Ascending aorta (tissue), 2 donors: ENCODE measurements at regions of chrX and their contacts with region 1.

Region 1: DNA sequence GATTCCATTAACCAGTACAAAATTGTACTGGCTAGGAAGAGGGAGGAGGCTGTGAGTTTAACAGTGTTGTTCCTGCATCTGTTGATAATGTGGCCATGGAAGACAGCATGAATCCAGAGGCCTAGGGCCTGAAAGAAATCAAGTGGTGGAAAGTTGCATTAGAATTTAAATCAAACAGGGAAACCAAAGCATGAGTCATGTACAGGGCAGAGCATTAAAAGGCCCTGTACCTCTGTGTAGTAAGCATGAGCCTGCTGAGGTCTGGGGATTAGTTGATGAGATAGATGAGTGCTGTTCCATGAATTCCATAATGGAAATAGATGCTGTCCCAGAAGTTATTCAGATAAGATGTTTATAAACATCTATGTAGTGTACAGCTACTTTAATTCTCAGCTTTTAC is 58.3 kb downstream of the MID1IP1 start:
- DNase-seq: no peak
- H3K4me3 ChIP-seq: no peak overlapping the region
- H3K27ac ChIP-seq: no peak overlapping the region
- H3K4me1 ChIP-seq: no peaks in the 10 kb centered on the region
- H3K27me3 ChIP-seq: no peaks in the 10 kb centered on the region
- CTCF ChIP-seq: no peak

Region 2: DNA sequence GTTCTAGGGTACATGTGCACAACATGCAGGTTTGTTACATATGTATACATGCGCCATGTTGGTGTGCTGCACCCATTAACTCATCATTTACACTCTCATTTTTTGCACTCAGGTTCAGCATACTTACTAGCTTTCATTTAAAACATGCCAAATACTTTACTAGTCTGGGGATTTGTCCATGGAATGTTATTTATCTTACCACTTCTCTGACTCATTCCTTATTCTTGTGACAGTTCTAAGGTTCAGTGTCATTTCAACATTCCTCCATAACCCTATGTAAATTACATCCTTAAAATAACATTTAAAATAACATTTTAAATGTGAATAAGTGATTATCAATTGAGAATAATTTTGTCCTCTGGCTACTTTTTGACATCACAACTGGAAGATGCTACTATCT is 872.7 kb before region 1 on chrX:
- intact Hi-C with region 1: no loop called
- DNase-seq: no peak
- H3K4me3 ChIP-seq: no peak overlapping the region
- H3K27ac ChIP-seq: no peak overlapping the region
- H3K4me1 ChIP-seq: no peaks in the 10 kb centered on the region
- H3K27me3 ChIP-seq: no peaks in the 10 kb centered on the region
- CTCF ChIP-seq: no peak

Region 3: DNA sequence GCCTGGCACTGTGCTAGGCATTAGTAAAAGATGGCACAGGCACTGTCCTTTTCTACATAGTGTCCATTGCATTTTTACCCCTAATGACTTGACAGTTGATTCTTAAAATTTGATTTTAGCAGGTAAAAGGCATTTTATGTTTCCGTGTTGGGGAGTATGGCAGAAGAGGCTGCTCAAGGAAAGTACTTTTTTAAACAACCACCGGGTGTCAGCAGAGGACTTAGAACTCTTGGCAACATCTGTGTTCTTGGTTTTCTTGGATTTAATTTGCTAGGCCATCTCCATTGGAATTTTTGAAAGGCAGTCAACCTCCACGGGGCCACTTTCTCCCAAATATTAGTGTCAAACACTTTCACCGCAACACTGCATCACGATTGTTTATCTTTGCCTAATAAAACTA is 195.3 kb before region 1 on chrX:
- intact Hi-C with region 1: no loop called
- DNase-seq: no peak
- H3K4me3 ChIP-seq: no peak overlapping the region
- H3K27ac ChIP-seq: no peak overlapping the region
- H3K4me1 ChIP-seq: no peaks in the 10 kb centered on the region
- H3K27me3 ChIP-seq: no peaks in the 10 kb centered on the region
- CTCF ChIP-seq: peak in 2 of 3 experiments; percentile 17 to 40

Region 4: DNA sequence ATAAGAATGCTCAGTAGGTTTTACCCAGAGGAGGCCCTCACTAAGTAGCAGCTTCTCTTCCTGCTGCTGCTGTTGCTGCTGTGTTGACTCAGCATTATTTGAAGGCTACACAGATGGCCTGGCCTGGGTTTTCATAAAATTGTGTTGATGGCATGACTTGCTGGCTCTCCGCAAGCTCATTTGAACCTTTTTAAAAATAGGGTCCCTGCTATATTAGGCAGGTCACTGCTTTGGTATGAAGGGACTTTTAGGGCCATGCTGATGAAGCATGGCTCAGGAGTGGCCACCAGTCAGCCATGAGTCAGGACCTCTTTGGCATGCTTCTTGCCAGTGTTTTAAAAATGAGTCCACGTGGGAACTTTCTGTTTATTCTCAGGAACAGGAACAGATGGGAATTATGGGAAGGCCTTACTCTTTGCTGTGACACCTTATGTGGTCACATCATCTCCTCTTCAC is 70.4 kb after region 1 on chrX:
- intact Hi-C with region 1: loop called (anchors 5 kb)
- DNase-seq: peak; percentile 14 to 81
- H3K4me3 ChIP-seq: no peak overlapping the region
- H3K27ac ChIP-seq: peak overlapping the region; percentile 56 to 64
- H3K4me1 ChIP-seq: peaks cover 0 to 5% of the 10 kb centered on the region in 2 donors
- H3K27me3 ChIP-seq: no peaks in the 10 kb centered on the region
- CTCF ChIP-seq: no peak

Region 5: DNA sequence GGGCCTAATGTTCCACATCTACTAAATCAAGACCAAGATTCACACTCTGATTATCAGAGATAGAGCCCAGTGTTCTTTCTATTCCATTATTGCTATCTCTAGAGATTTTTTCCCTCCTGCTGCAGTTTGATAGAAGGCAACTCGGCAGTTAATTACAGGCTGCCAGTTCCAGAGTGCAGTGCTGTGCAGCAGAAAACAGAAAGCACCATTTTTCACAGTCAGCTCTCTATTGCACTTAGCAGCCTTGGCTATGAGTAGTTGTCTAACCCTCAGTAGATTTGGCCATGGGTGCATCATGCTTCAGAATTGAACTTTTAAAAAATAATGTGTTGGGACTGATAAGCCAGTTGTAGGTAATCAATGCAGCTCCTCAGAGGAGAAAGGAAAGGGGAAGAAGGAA is 237.0 kb after region 1 on chrX:
- intact Hi-C with region 1: no loop called
- DNase-seq: no peak
- H3K4me3 ChIP-seq: no peak overlapping the region
- H3K27ac ChIP-seq: no peak overlapping the region
- H3K4me1 ChIP-seq: no peaks in the 10 kb centered on the region
- H3K27me3 ChIP-seq: no peaks in the 10 kb centered on the region
- CTCF ChIP-seq: no peak